ENCODE measurements at regions of chr12 and their contacts with region 1.

Region 1: DNA sequence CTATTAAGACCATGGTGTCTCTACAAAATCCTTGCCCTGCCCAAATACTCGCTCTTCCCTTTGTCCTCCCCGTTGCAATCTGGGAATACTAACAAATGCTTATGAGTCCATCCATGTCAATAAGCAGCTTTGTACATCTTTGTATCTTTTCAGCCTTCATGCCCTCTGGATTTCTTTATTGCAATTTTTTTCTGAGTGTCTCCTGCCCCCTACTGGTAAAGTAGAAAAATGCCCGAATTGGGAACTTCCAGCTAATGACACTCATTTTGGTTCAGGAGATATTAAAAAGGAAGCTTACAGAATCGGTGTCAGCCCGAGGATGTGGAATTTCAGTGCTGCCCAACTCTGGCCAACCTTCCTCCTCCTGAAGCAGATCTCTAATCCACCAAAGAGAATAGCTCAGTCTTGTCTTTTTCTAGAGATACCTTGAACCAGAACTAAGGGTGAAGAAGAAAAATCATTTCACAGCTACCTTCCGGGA is 46.0 kb downstream of the SH2B3 start:
- DNase-seq: peak in 1 of 3 donors; percentile 19
- ATAC-seq: peak; percentile 36 to 61 (median 52)
- H3K4me3 ChIP-seq: no peak overlapping the region
- H3K27ac ChIP-seq: no peak overlapping the region
- H3K4me1 ChIP-seq: peaks cover 0 to 2% (median 0%) of the 10 kb centered on the region in 4 donors
- H3K27me3 ChIP-seq: no peaks in the 10 kb centered on the region
- CTCF ChIP-seq: peak; percentile 68 to 91 (median 76)
- POLR2A ChIP-seq: no peak

Region 2: GRCh38 chr12:111396726-111397445 is 54.8 kb before region 1 on chr12:
- intact Hi-C with region 1: loop called (anchors 5 to 10 kb)
- DNase-seq: peak; percentile 89 to 91 (median 90)
- ATAC-seq: peak; percentile 87 to 94 (median 90)
- H3K4me3 ChIP-seq: peak overlapping the region in 2 of 3 donors; percentile 1 to 31
- H3K27ac ChIP-seq: peak overlapping the region; percentile 16 to 41 (median 34)
- H3K4me1 ChIP-seq: peaks cover 0 to 9% (median 3%) of the 10 kb centered on the region in 4 donors
- H3K27me3 ChIP-seq: no peaks in the 10 kb centered on the region
- CTCF ChIP-seq: peak; percentile 98 to 99 (median 99)
- POLR2A ChIP-seq: no peak